ENCODE measurements at regions of chr5 and their contacts with region 1.

Region 1: DNA sequence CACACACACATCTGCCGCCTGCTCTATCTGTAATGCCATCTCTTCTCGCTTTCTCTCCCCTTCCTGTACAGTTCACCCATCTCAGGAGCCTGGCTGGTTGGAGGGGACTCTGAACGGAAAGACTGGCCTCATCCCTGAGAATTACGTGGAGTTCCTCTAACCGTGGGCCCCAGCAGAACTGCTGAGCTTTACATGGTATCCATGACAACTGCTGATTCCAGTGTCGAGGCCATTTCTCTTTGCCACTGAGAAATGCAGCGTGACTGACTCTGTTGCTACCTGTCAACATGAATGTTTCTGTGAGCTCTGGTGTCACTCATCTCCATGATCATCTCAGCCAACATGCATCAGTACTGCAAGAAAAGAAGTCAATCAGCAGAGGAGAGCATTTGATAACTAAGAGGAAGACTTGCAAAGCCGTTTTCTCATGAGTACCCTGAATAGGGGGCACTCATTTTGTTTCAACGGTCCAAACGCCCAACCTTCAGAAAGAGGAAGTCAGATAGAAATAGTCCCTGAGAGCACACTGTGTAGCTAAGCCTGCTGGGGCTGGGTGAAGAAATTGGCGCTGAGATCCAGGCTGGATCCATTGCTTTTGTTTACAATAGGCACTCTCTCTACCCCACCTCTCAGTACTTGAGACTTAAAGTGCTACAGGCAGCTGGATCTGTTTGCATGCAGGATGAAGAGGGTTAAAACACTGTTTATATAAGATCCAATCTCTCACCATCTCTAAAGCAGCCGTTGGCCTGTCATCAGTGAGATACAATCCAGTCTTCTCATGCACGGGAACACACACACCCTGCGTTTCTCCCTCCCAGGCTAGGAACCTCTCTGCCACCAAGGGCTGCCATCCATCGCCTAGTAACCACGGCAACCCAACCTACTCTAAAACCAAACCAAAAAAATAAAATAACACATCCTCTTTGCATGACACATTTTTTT is 180.9 kb downstream of the NR3C1 start:
- DNase-seq: peak; percentile 56
- H3K4me3 Mint-ChIP-seq: peak overlapping the region; percentile 15
- H3K27ac Mint-ChIP-seq: peak overlapping the region; percentile 78
- H3K4me1 Mint-ChIP-seq: peaks cover 39% of the 10 kb centered on the region
- H3K27me3 Mint-ChIP-seq: no peaks in the 10 kb centered on the region

Region 2: GRCh38 chr5:143033535-143034250 is 188.9 kb before region 1 on chr5:
- CTCF ChIA-PET with region 1: no interaction called
- intact Hi-C with region 1: loop called (anchors 10 kb)
- DNase-seq: no peak
- H3K4me3 Mint-ChIP-seq: no peak overlapping the region
- H3K27ac Mint-ChIP-seq: no peak overlapping the region
- H3K4me1 Mint-ChIP-seq: peaks cover 75% of the 10 kb centered on the region
- H3K27me3 Mint-ChIP-seq: no peaks in the 10 kb centered on the region

Region 3: DNA sequence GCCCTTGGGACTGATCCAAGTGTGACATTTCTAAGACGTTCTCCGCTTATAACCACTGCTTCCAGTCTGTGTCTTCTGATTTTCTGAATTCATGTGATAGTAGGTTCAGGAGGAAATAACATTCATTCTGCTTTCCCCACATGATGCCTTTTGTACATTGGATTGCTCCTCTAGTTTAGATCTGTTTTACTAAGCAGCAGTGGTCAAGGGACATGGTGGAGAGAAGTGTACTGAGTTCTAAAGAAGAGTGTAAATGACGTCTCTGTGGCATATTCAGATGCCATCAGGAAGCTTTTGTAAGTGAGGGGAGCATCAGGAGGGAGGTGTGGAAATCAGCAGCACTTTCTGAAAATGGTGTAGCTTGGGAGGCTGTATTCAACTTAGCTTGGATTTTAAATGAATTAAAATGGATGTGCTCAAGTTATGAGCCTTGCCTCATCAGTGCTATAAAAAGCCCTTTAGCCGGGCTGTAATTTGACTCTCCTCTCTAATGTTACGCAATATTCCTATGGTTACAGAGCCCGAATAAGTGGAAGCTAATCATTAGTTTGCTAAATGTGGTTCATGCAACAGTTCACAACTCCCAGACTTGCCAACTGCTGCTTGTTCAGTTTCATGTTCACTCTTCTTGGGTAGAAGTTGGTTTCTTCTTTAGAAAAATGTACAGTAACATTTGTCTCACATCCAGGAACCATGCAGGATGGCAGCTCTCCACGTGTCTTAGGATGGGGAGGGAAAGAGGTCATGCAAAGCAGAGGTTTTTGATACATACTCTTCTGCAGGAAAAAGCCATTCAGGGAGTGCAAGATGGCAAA is 171.1 kb before region 1 on chr5:
- CTCF ChIA-PET with region 1: no interaction called
- intact Hi-C with region 1: loop called (anchors 2 kb)
- DNase-seq: no peak
- H3K4me3 Mint-ChIP-seq: no peak overlapping the region
- H3K27ac Mint-ChIP-seq: no peak overlapping the region
- H3K4me1 Mint-ChIP-seq: peaks cover 67% of the 10 kb centered on the region
- H3K27me3 Mint-ChIP-seq: no peaks in the 10 kb centered on the region

Region 4: GRCh38 chr5:143182901-143183820 is 39.4 kb before region 1 on chr5:
- CTCF ChIA-PET with region 1: interaction called, 4 read pairs
- intact Hi-C with region 1: loop called (anchors 2 kb)
- DNase-seq: peak; percentile 73
- H3K4me3 Mint-ChIP-seq: no peak overlapping the region
- H3K27ac Mint-ChIP-seq: peak overlapping the region; percentile 68
- H3K4me1 Mint-ChIP-seq: peaks cover 29% of the 10 kb centered on the region
- H3K27me3 Mint-ChIP-seq: no peaks in the 10 kb centered on the region

Region 5: DNA sequence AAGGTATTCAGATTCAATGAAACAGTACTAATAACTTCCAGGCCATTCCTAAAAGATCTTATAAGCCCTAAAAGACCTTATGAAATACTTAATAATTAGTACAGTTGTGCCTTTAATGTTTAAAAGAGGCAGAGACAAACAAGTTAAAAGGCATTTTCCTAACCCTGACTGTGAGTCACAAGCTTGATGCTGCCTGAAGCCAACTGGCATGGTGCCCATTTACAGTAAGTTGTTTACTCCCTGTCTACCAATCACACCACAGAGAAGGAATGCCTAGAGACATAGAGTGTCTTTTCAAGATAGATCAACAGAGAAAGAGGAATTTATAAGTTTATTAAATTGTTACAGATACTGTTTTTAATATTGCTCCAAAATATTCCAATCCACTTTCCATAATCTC is 133.2 kb after region 1 on chr5:
- CTCF ChIA-PET with region 1: no interaction called
- intact Hi-C with region 1: loop called (anchors 5 kb)
- DNase-seq: peak; percentile 60
- H3K4me3 Mint-ChIP-seq: no peak overlapping the region
- H3K27ac Mint-ChIP-seq: no peak overlapping the region
- H3K4me1 Mint-ChIP-seq: peaks cover 71% of the 10 kb centered on the region
- H3K27me3 Mint-ChIP-seq: no peaks in the 10 kb centered on the region